ENCODE measurements at regions of chr1 and their contacts with region 1.

Region 1: GRCh38 chr1:165073185-165074007 is 283.1 kb downstream of the LMX1A start:
- DNase-seq: no peak
- H3K4me3 ChIP-seq: no peak overlapping the region
- H3K27ac ChIP-seq: no peak overlapping the region
- H3K4me1 ChIP-seq: peaks cover 11% of the 10 kb centered on the region
- H3K27me3 ChIP-seq: no peaks in the 10 kb centered on the region
- CTCF ChIP-seq: peak; percentile 87

Region 2: GRCh38 chr1:163361123-163361934 is 1712.1 kb before region 1 on chr1:
- intact Hi-C with region 1: loop called (anchors 10 kb)
- DNase-seq: no peak
- H3K4me3 ChIP-seq: no peak overlapping the region
- H3K27ac ChIP-seq: no peak overlapping the region
- H3K4me1 ChIP-seq: peaks cover 4% of the 10 kb centered on the region
- H3K27me3 ChIP-seq: no peaks in the 10 kb centered on the region
- CTCF ChIP-seq: peak; percentile 33

Region 3: DNA sequence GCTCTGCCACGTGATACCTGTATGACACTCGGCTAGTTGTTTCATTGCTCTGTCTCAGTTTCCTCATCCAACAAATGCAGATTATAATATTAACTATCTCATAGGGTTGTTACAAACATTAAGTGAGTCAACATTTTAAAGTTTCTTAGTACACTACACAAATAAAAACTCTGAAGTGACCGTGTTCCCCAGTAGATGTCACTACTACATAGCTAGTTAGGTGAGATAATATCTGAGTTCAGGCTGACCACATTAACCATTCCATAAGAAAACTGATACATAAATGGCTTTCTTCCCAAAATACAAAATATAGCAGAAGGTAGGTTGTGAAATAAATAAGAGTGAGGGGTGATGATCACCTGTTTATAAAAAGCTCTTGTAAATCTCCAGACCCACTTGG is 1537.6 kb before region 1 on chr1:
- intact Hi-C with region 1: loop called (anchors 10 kb)
- DNase-seq: no peak
- H3K4me3 ChIP-seq: no peak overlapping the region
- H3K27ac ChIP-seq: no peak overlapping the region
- H3K4me1 ChIP-seq: no peaks in the 10 kb centered on the region
- H3K27me3 ChIP-seq: peaks cover 6% of the 10 kb centered on the region
- CTCF ChIP-seq: peak; percentile 50

Region 4: DNA sequence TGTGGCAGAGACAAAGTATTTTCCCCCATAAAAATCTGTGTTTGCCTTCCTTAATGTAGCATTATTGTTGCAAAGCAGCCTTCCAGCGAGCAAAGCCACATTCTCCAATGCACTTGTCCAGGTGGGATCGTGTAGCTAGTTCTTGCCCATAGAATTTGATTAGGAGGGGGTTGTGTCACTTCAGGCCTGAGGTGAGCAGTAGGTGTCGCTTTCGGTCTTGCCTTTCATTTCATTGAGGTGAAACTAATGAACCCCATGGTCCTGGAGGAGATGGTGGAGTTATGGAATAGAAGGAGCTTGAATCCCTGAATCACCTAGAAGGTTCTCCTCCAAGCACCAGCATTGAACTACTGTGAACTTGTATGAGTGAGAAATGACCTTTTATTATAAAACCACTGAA is 833.3 kb before region 1 on chr1:
- intact Hi-C with region 1: loop called (anchors 10 kb)
- DNase-seq: no peak
- H3K4me3 ChIP-seq: no peak overlapping the region
- H3K27ac ChIP-seq: no peak overlapping the region
- H3K4me1 ChIP-seq: no peaks in the 10 kb centered on the region
- H3K27me3 ChIP-seq: no peaks in the 10 kb centered on the region
- CTCF ChIP-seq: peak; percentile 52

Region 5: GRCh38 chr1:165257969-165258459 is 184.6 kb after region 1 on chr1:
- intact Hi-C with region 1: no loop called
- DNase-seq: peak; percentile 49
- H3K4me3 ChIP-seq: no peak overlapping the region
- H3K27ac ChIP-seq: no peak overlapping the region
- H3K4me1 ChIP-seq: peaks cover 3% of the 10 kb centered on the region
- H3K27me3 ChIP-seq: peaks cover 37% of the 10 kb centered on the region
- CTCF ChIP-seq: peak; percentile 67

Region 6: DNA sequence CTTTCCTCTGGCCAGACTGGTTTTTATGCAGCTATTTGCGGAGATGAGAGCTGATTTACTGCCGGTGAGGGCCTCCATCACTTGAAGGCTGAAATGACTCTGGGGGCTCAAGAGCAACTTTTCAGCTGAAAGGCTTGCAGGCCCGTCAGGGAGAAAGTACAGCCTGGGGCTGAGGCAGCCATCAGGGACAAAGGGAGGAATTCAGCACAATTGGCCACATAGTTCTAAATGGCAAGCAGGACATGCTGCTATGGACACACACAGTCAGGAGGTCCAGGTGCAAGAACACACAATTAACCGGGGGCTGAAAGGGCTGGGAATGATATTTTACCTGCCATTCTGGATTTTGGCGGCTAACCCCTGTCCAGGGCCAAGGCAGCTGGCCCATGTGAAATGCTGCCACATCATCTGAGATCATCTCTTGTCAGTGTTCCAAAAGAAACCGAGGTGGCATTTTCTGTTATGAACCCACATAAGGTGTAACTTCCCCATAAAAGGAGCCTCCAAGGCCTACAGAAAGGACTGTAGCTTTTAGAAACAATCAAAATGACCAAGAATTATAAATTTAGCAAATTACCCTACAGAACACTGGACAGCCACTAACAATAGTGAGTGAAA is 224.9 kb after region 1 on chr1:
- intact Hi-C with region 1: no loop called
- DNase-seq: no peak
- H3K4me3 ChIP-seq: no peak overlapping the region
- H3K27ac ChIP-seq: no peak overlapping the region
- H3K4me1 ChIP-seq: no peaks in the 10 kb centered on the region
- H3K27me3 ChIP-seq: peaks cover 54% of the 10 kb centered on the region
- CTCF ChIP-seq: no peak

Measured in left ventricle myocardium inferior (tissue), 1 donor.